Naive thymus-derived CD4-positive, alpha-beta T cell (primary cell): ENCODE measurements at regions of chr15 and their contacts with region 1.

Region 1: GRCh38 chr15:79970624-79971434 is at the start of gene BCL2A1:
- DNase-seq: peak; percentile 30 to 85 (median 80)
- ATAC-seq: peak; percentile 91
- H3K4me3 ChIP-seq: peak within 1 kb of the TSS; percentile 81
- H3K4me3 Mint-ChIP-seq: peak within 1 kb of the TSS; percentile 88 to 98 (median 94)
- H3K27ac ChIP-seq: peak within 1 kb of the TSS; percentile 75
- H3K27ac Mint-ChIP-seq: peak within 1 kb of the TSS; percentile 93 to 99 (median 95)
- H3K4me1 ChIP-seq: peaks cover 27 to 39% of the 10 kb centered on the region in 2 donors
- H3K4me1 Mint-ChIP-seq: peaks cover 41 to 66% (median 58%) of the 10 kb centered on the region in 7 donors
- H3K27me3 ChIP-seq: no peaks in the 10 kb centered on the region
- H3K27me3 Mint-ChIP-seq: no peaks in the 10 kb centered on the region
- total RNA-seq, gene BCL2A1: 27.3 to 119 (median 31.0) TPM

Region 2: DNA sequence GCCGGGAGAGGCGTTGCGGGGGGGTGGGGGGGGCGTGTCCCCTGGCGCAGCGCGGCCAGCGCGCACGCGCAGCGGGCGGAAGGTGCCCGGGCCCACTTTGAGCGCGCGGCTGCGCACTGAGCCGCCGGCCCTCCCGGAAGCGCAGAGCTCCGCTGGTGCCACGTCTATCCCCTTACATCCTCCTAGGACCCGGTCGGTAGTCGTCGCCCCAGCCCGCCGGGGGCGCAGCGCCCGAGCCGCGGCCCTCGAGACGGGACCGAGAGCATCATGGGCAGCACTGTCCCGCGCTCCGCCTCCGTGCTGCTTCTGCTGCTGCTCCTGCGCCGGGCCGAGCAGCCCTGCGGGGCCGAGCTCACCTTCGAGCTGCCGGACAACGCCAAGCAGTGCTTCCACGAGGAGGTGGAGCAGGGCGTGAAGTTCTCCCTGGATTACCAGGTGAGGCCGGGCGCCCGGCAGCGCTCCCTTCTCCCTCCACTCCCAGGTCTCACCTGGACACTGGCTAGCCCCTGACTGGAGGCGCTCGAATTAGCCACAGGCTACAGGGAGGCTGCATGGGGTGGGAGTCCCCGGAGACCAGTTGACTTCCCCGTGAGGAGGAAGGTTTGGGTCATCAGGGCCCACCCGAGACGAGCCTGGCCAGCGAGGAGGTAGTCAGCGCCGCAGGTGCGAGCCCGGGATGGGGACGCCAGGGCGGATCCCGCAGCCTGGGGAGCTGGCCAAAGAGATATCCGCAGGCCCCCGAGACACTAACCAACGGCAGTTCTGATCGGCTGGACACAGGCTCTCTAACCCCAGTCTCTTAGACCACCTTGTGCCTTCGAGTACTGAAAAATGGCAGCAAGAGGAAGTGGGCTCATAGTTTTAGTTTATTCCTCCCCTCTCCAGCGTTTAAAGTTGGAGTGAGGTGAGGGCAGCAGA is 659.6 kb before region 1 on chr15 and contains the start of gene TMED3:
- CTCF ChIA-PET with region 1: no interaction called
- POLR2A ChIA-PET with region 1: no interaction called
- intact Hi-C with region 1: loop called in 1 of 2 experiments (anchors 5 kb)
- DNase-seq: peak; percentile 58 to 85 (median 79)
- ATAC-seq: peak; percentile 92
- H3K4me3 ChIP-seq: peak within 1 kb of the TSS; percentile 90
- H3K4me3 Mint-ChIP-seq: peak within 1 kb of the TSS; percentile 85 to 93 (median 90)
- H3K27ac ChIP-seq: peak within 1 kb of the TSS; percentile 62
- H3K27ac Mint-ChIP-seq: peak within 1 kb of the TSS; percentile 4 to 74 (median 66)
- H3K4me1 ChIP-seq: peaks cover 13 to 20% of the 10 kb centered on the region in 2 donors
- H3K4me1 Mint-ChIP-seq: peaks cover 24 to 52% (median 46%) of the 10 kb centered on the region in 7 donors
- H3K27me3 ChIP-seq: no peaks in the 10 kb centered on the region
- H3K27me3 Mint-ChIP-seq: peaks cover 0 to 29% (median 4%) of the 10 kb centered on the region in 5 donors
- total RNA-seq, gene TMED3: 18.6 to 40.5 (median 21.1) TPM

Region 3: GRCh38 chr15:79896637-79897379 is 74.0 kb before region 1 on chr15 and contains the start of gene MTHFS:
- CTCF ChIA-PET with region 1: interaction called, 3 read pairs
- POLR2A ChIA-PET with region 1: interaction called, 68 read pairs
- intact Hi-C with region 1: loop called (anchors 1 kb)
- DNase-seq: peak; percentile 73 to 87 (median 83)
- ATAC-seq: peak; percentile 92
- H3K4me3 ChIP-seq: peak within 1 kb of the TSS; percentile 71
- H3K4me3 Mint-ChIP-seq: peak within 1 kb of the TSS; percentile 91 to 100 (median 99)
- H3K27ac ChIP-seq: peak within 1 kb of the TSS; percentile 92
- H3K27ac Mint-ChIP-seq: peak within 1 kb of the TSS; percentile 97 to 100 (median 100)
- H3K4me1 ChIP-seq: peaks cover 20 to 23% of the 10 kb centered on the region in 2 donors
- H3K4me1 Mint-ChIP-seq: peaks cover 28 to 49% (median 46%) of the 10 kb centered on the region in 7 donors
- H3K27me3 ChIP-seq: no peaks in the 10 kb centered on the region
- H3K27me3 Mint-ChIP-seq: no peaks in the 10 kb centered on the region
- total RNA-seq, gene MTHFS: 15.8 to 31.8 (median 20.3) TPM

Region 4: GRCh38 chr15:79943820-79944219 is 27.0 kb before region 1 on chr15:
- CTCF ChIA-PET with region 1: no interaction called
- POLR2A ChIA-PET with region 1: no interaction called
- intact Hi-C with region 1: no loop called
- DNase-seq: no peak
- ATAC-seq: no peak
- H3K4me3 ChIP-seq: no peak overlapping the region
- H3K4me3 Mint-ChIP-seq: no peak overlapping the region
- H3K27ac ChIP-seq: no peak overlapping the region
- H3K27ac Mint-ChIP-seq: no peak overlapping the region
- H3K4me1 ChIP-seq: no peaks in the 10 kb centered on the region
- H3K4me1 Mint-ChIP-seq: peaks cover 0 to 6% (median 0%) of the 10 kb centered on the region in 7 donors
- H3K27me3 ChIP-seq: no peaks in the 10 kb centered on the region
- H3K27me3 Mint-ChIP-seq: peaks cover 0 to 6% (median 0%) of the 10 kb centered on the region in 5 donors

Region 5: DNA sequence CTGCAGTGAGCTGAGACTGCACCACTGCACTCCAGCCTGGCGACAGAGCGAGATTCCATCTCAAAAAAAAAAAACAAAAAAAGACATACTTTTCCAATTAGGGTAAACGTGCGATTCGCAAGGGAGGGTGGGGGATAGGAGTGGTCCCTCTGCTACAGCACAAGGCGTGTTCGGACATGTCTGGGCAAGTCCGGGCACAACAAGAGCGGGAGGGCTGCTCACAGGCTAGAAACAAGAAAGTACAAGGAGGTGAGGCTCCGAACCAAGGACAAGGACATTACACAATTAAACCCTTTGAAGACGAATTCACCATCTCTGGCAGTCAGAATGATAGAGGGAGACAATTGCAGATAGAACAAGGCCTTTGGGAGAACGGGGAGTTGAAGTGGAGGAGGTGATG is 32.3 kb after region 1 on chr15:
- CTCF ChIA-PET with region 1: no interaction called
- POLR2A ChIA-PET with region 1: no interaction called
- intact Hi-C with region 1: no loop called
- DNase-seq: no peak
- ATAC-seq: no peak
- H3K4me3 ChIP-seq: no peak overlapping the region
- H3K4me3 Mint-ChIP-seq: no peak overlapping the region
- H3K27ac ChIP-seq: no peak overlapping the region
- H3K27ac Mint-ChIP-seq: no peak overlapping the region
- H3K4me1 ChIP-seq: no peaks in the 10 kb centered on the region
- H3K4me1 Mint-ChIP-seq: peaks cover 0 to 2% (median 0%) of the 10 kb centered on the region in 7 donors
- H3K27me3 ChIP-seq: no peaks in the 10 kb centered on the region
- H3K27me3 Mint-ChIP-seq: no peaks in the 10 kb centered on the region

Region 6: GRCh38 chr15:80160570-80161156 is 189.8 kb after region 1 on chr15:
- CTCF ChIA-PET with region 1: no interaction called
- POLR2A ChIA-PET with region 1: no interaction called
- intact Hi-C with region 1: loop called in 1 of 2 experiments (anchors 1 kb)
- DNase-seq: peak in 1 of 9 donors; percentile 46
- ATAC-seq: peak; percentile 94
- H3K4me3 ChIP-seq: no peak overlapping the region
- H3K4me3 Mint-ChIP-seq: peak overlapping the region in 1 of 10 donors; percentile 73
- H3K27ac ChIP-seq: no peak overlapping the region
- H3K27ac Mint-ChIP-seq: peak overlapping the region in 3 of 9 donors; percentile 18 to 91 (median 46)
- H3K4me1 ChIP-seq: peaks cover 0 to 3% of the 10 kb centered on the region in 2 donors
- H3K4me1 Mint-ChIP-seq: peaks cover 8 to 31% (median 11%) of the 10 kb centered on the region in 7 donors
- H3K27me3 ChIP-seq: no peaks in the 10 kb centered on the region
- H3K27me3 Mint-ChIP-seq: no peaks in the 10 kb centered on the region